ENCODE measurements at regions of chr3 and their contacts with region 1.

Region 1: GRCh38 chr3:148943506-148944205 is 47.7 kb upstream of the GYG1 start:
- DNase-seq: no peak
- ATAC-seq: peak; percentile 95 to 99 (median 98)
- H3K4me3 ChIP-seq: no peak overlapping the region
- H3K27ac ChIP-seq: no peak overlapping the region
- H3K4me1 ChIP-seq: peaks cover 15% of the 10 kb centered on the region
- H3K27me3 ChIP-seq: no peaks in the 10 kb centered on the region
- CTCF ChIP-seq: peak; percentile 77

Region 2: DNA sequence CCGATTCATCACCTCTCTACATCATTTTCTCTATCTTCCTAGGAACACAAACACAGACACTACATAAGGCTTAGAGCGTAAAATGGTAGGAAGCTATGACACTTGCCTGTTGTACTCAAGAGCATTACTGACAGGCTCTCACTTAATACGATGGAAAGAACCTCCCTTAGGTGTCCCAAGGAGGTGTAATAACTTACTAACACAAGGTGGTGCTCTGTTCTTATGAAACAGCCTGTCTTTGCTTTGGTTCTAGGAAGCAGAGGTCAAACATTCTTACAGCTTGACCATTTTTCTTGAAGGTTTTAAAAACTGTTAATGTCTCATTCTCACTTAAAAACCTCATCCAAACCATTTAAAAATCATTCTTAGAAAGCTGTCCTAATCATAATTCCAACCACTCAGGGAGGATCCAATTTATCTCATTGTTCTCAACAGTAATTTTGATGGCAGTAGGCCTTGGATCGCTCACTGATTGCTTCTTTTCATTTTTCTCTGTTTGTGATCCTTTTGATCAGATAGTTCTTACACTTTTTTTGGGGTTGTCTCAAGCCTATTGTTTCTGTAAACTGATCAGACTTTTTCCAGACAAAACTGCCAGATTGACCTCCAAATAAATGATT is 563.8 kb before region 1 on chr3:
- intact Hi-C with region 1: loop called (anchors 5 to 10 kb)
- DNase-seq: no peak
- ATAC-seq: peak; percentile 42 to 83 (median 60)
- H3K4me3 ChIP-seq: no peak overlapping the region
- H3K27ac ChIP-seq: no peak overlapping the region
- H3K4me1 ChIP-seq: no peaks in the 10 kb centered on the region
- H3K27me3 ChIP-seq: no peaks in the 10 kb centered on the region
- CTCF ChIP-seq: peak; percentile 46

Region 3: GRCh38 chr3:148727247-148727646 is 216.4 kb before region 1 on chr3:
- intact Hi-C with region 1: loop called in 1 of 2 experiments (anchors 10 kb)
- DNase-seq: no peak
- ATAC-seq: peak in 2 of 4 donors; percentile 56 to 65
- H3K4me3 ChIP-seq: no peak overlapping the region
- H3K27ac ChIP-seq: no peak overlapping the region
- H3K4me1 ChIP-seq: no peaks in the 10 kb centered on the region
- H3K27me3 ChIP-seq: no peaks in the 10 kb centered on the region
- CTCF ChIP-seq: peak; percentile 23

Region 4: GRCh38 chr3:148861277-148861869 is 82.3 kb before region 1 on chr3:
- intact Hi-C with region 1: loop called (anchors 1 to 2 kb)
- DNase-seq: no peak
- ATAC-seq: peak in 3 of 4 donors; percentile 73 to 91 (median 81)
- H3K4me3 ChIP-seq: no peak overlapping the region
- H3K27ac ChIP-seq: no peak overlapping the region
- H3K4me1 ChIP-seq: peaks cover 16% of the 10 kb centered on the region
- H3K27me3 ChIP-seq: no peaks in the 10 kb centered on the region
- CTCF ChIP-seq: peak; percentile 78

Measured in psoas muscle (tissue), 8 donors.